Heart left ventricle (tissue), 16 donors: ENCODE measurements at regions of chr13 and their contacts with region 1.

Region 1: GRCh38 chr13:74005320-74006157 is 128.7 kb downstream of the KLF12 start:
- DNase-seq: no peak
- ATAC-seq: no peak
- H3K4me3 ChIP-seq: no peak overlapping the region
- H3K27ac ChIP-seq: no peak overlapping the region
- H3K4me1 ChIP-seq: peaks cover 0 to 18% (median 6%) of the 10 kb centered on the region in 12 donors
- H3K27me3 ChIP-seq: no peaks in the 10 kb centered on the region
- CTCF ChIP-seq: no peak
- POLR2A ChIP-seq: no peak

Region 2: GRCh38 chr13:73938375-73939070 is 67.0 kb before region 1 on chr13:
- intact Hi-C with region 1: loop called in 1 of 10 experiments (anchors 10 kb)
- DNase-seq: no peak
- ATAC-seq: peak in 1 of 4 donors; percentile 44
- H3K4me3 ChIP-seq: no peak overlapping the region
- H3K27ac ChIP-seq: no peak overlapping the region
- H3K4me1 ChIP-seq: peaks cover 0 to 42% (median 15%) of the 10 kb centered on the region in 12 donors
- H3K27me3 ChIP-seq: no peaks in the 10 kb centered on the region
- CTCF ChIP-seq: no peak
- POLR2A ChIP-seq: no peak

Region 3: DNA sequence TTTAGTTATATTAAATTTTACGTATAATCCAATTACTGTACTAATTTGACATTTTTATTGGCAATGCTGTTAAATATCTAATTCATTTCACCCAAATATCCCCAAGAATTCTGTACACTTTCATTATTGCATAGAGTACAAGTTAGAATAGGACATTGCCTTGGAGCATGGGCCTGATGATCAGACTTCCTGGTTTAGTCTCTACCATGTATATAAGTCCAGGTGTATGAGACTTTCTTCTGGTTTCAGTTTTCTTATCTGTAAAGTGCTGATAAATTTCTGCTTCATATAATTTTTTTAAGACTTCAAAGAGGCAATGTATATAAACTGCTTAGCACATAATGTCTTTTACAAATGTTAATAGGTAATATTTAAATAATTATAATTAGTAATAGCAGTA is 50.7 kb before region 1 on chr13:
- intact Hi-C with region 1: no loop called
- DNase-seq: no peak
- ATAC-seq: no peak
- H3K4me3 ChIP-seq: no peak overlapping the region
- H3K27ac ChIP-seq: no peak overlapping the region
- H3K4me1 ChIP-seq: peaks cover 0 to 29% (median 12%) of the 10 kb centered on the region in 12 donors
- H3K27me3 ChIP-seq: no peaks in the 10 kb centered on the region
- CTCF ChIP-seq: no peak
- POLR2A ChIP-seq: no peak